Natural killer cell (primary cell): ENCODE measurements at regions of chr5 and their contacts with region 1.

Region 1: GRCh38 chr5:170809551-170809950 is 26.0 kb downstream of the GABRP start:
- DNase-seq: peak in 1 of 2 donors; percentile 9
- ATAC-seq: peak in 1 of 3 donors; percentile 39
- H3K4me3 ChIP-seq: no peak overlapping the region
- H3K4me3 Mint-ChIP-seq: no peak overlapping the region
- H3K27ac ChIP-seq: no peak overlapping the region
- H3K27ac Mint-ChIP-seq: no peak overlapping the region
- H3K4me1 ChIP-seq: no peaks in the 10 kb centered on the region
- H3K4me1 Mint-ChIP-seq: no peaks in the 10 kb centered on the region
- H3K27me3 ChIP-seq: peaks cover 3% of the 10 kb centered on the region
- H3K27me3 Mint-ChIP-seq: peaks cover 7 to 43% of the 10 kb centered on the region in 2 donors
- CTCF ChIP-seq: no peak

Region 2: DNA sequence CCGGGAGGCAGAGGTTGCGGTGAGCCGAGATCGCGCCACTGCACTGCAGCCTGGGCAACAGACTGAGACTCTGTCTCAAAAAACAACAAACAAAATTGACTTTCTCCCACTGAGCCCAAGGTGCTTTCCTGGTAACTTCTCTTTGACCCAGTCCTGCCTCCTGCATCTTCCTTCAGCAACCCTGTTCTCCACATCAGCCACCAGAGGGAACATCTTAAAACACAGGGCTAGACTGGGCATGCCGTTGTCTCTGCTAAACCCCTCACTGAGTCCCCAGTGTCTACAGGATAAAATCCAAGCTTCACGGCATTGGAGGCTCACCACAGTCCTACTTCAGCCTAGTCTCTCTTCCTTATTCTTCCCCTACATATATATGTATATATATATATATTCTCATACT is 380.5 kb before region 1 on chr5:
- intact Hi-C with region 1: no loop called
- DNase-seq: no peak
- ATAC-seq: no peak
- H3K4me3 ChIP-seq: no peak overlapping the region
- H3K4me3 Mint-ChIP-seq: no peak overlapping the region
- H3K27ac ChIP-seq: no peak overlapping the region
- H3K27ac Mint-ChIP-seq: no peak overlapping the region
- H3K4me1 ChIP-seq: no peaks in the 10 kb centered on the region
- H3K4me1 Mint-ChIP-seq: no peaks in the 10 kb centered on the region
- H3K27me3 ChIP-seq: no peaks in the 10 kb centered on the region
- H3K27me3 Mint-ChIP-seq: peaks cover 11 to 13% of the 10 kb centered on the region in 2 donors
- CTCF ChIP-seq: no peak

Region 3: GRCh38 chr5:171342362-171343111 is 533.0 kb after region 1 on chr5:
- intact Hi-C with region 1: loop called (anchors 10 kb)
- DNase-seq: peak in 1 of 2 donors; percentile 64
- ATAC-seq: peak; percentile 64 to 78 (median 71)
- H3K4me3 ChIP-seq: no peak overlapping the region
- H3K4me3 Mint-ChIP-seq: no peak overlapping the region
- H3K27ac ChIP-seq: no peak overlapping the region
- H3K27ac Mint-ChIP-seq: no peak overlapping the region
- H3K4me1 ChIP-seq: no peaks in the 10 kb centered on the region
- H3K4me1 Mint-ChIP-seq: no peaks in the 10 kb centered on the region
- H3K27me3 ChIP-seq: peaks cover 1% of the 10 kb centered on the region
- H3K27me3 Mint-ChIP-seq: peaks cover 11 to 12% of the 10 kb centered on the region in 2 donors
- CTCF ChIP-seq: peak; percentile 67